ENCODE measurements at regions of chr11 and their contacts with region 1.

Region 1: GRCh38 chr11:110797453-110797852 is 85.2 kb upstream of the ARHGAP20 start:
- DNase-seq: peak; percentile 88
- ATAC-seq: peak; percentile 95
- H3K4me3 ChIP-seq: no peak overlapping the region
- H3K27ac ChIP-seq: no peak overlapping the region
- H3K4me1 ChIP-seq: peaks cover 4% of the 10 kb centered on the region
- H3K27me3 ChIP-seq: no peaks in the 10 kb centered on the region
- CTCF ChIP-seq: no peak
- EP300 ChIP-seq: peak; percentile 55 to 80; a peak in 3 of 4 replicates
- POLR2A ChIP-seq: no peak
- RAD21 ChIP-seq: no peak

Region 2: GRCh38 chr11:110645253-110645652 is 152.2 kb before region 1 on chr11:
- CTCF ChIA-PET with region 1: no interaction called
- POLR2A ChIA-PET with region 1: no interaction called
- RAD21 ChIA-PET with region 1: no interaction called
- SMC1A ChIA-PET with region 1: no interaction called
- in situ Hi-C with region 1: no loop called
- intact Hi-C with region 1: no loop called
- DNase-seq: no peak
- ATAC-seq: no peak
- H3K4me3 ChIP-seq: no peak overlapping the region
- H3K27ac ChIP-seq: no peak overlapping the region
- H3K4me1 ChIP-seq: no peaks in the 10 kb centered on the region
- H3K27me3 ChIP-seq: no peaks in the 10 kb centered on the region
- CTCF ChIP-seq: no peak
- EP300 ChIP-seq: no peak
- POLR2A ChIP-seq: no peak
- RAD21 ChIP-seq: no peak

Region 3: DNA sequence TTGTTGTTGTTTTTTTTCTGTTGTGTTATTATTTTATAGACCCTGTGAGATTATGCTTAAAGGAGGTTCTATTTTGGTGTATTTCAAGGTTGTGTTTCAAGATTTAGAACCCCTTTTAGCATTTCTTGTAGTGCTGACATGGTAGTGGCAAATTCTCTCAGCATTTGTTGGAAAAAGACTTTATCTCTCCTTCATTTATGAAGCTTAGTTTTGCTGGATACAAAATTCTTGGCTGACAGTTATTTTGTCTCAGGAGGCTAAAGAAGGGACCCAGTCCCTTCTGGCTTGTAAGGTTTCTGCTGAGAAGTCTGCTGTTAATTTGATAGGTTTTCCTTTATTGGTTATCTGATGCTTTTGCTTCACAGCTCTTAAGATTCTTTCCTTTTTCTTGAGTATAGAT is 44.6 kb before region 1 on chr11:
- CTCF ChIA-PET with region 1: no interaction called
- POLR2A ChIA-PET with region 1: no interaction called
- RAD21 ChIA-PET with region 1: no interaction called
- SMC1A ChIA-PET with region 1: no interaction called
- in situ Hi-C with region 1: no loop called
- intact Hi-C with region 1: no loop called
- DNase-seq: no peak
- ATAC-seq: no peak
- H3K4me3 ChIP-seq: no peak overlapping the region
- H3K27ac ChIP-seq: no peak overlapping the region
- H3K4me1 ChIP-seq: no peaks in the 10 kb centered on the region
- H3K27me3 ChIP-seq: no peaks in the 10 kb centered on the region
- CTCF ChIP-seq: no peak
- EP300 ChIP-seq: no peak
- POLR2A ChIP-seq: no peak
- RAD21 ChIP-seq: no peak

Region 4: GRCh38 chr11:110858547-110858921 is 61.1 kb after region 1 on chr11:
- CTCF ChIA-PET with region 1: no interaction called
- POLR2A ChIA-PET with region 1: no interaction called
- RAD21 ChIA-PET with region 1: interaction called, 6 read pairs
- SMC1A ChIA-PET with region 1: interaction called, 3 read pairs
- in situ Hi-C with region 1: no loop called
- intact Hi-C with region 1: loop called (anchors 1 kb)
- DNase-seq: no peak
- ATAC-seq: peak; percentile 59
- H3K4me3 ChIP-seq: no peak overlapping the region
- H3K27ac ChIP-seq: no peak overlapping the region
- H3K4me1 ChIP-seq: peaks cover 10% of the 10 kb centered on the region
- H3K27me3 ChIP-seq: no peaks in the 10 kb centered on the region
- CTCF ChIP-seq: no peak
- EP300 ChIP-seq: no peak
- POLR2A ChIP-seq: no peak
- RAD21 ChIP-seq: no peak

Region 5: GRCh38 chr11:110951037-110951949 is 153.8 kb after region 1 on chr11:
- CTCF ChIA-PET with region 1: no interaction called
- POLR2A ChIA-PET with region 1: interaction called, 6 read pairs
- RAD21 ChIA-PET with region 1: interaction called, 7 read pairs
- SMC1A ChIA-PET with region 1: interaction called, 11 read pairs
- in situ Hi-C with region 1: no loop called
- intact Hi-C with region 1: no loop called
- DNase-seq: peak; percentile 19
- ATAC-seq: peak; percentile 81
- H3K4me3 ChIP-seq: no peak overlapping the region
- H3K27ac ChIP-seq: no peak overlapping the region
- H3K4me1 ChIP-seq: peaks cover 3% of the 10 kb centered on the region
- H3K27me3 ChIP-seq: no peaks in the 10 kb centered on the region
- CTCF ChIP-seq: no peak
- EP300 ChIP-seq: no peak
- POLR2A ChIP-seq: no peak
- RAD21 ChIP-seq: no peak

Measured in GM12878 (cell line).